ENCODE measurements at regions of chr15 and their contacts with region 1.

Region 1: DNA sequence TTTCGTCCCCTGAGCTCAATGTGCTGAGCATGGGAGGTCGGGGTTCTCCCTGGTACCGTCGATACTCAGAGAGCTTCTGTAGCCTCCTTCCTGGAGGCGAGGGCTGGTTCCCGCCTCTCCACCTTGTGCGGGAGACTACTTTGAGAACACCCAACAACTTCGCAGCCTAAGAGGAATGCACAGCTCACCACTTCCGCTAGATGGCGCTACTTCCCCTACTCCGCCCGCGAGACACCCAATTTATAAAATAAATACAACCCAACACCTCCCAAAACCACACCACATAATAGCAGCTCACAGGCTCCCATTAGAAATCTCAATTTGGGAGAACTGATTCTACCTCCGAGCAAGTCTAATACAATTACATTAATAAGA is 1.2 kb downstream of the RGMA start:
- DNase-seq: peak; percentile 57 to 73
- H3K4me3 ChIP-seq: peak overlapping the region; percentile 57
- H3K4me3 Mint-ChIP-seq: peak overlapping the region; percentile 74
- H3K27ac Mint-ChIP-seq: no peak overlapping the region
- H3K4me1 ChIP-seq: no peaks in the 10 kb centered on the region
- H3K4me1 Mint-ChIP-seq: no peaks in the 10 kb centered on the region
- H3K27me3 ChIP-seq: no peaks in the 10 kb centered on the region
- H3K27me3 Mint-ChIP-seq: peaks cover 13% of the 10 kb centered on the region
- CTCF ChIP-seq: peak; percentile 84 to 91

Region 2: GRCh38 chr15:91882858-91883586 is 1204.8 kb before region 1 on chr15:
- CTCF ChIA-PET with region 1: no interaction called
- POLR2A ChIA-PET with region 1: no interaction called
- intact Hi-C with region 1: no loop called
- DNase-seq: no peak
- H3K4me3 ChIP-seq: no peak overlapping the region
- H3K4me3 Mint-ChIP-seq: no peak overlapping the region
- H3K27ac Mint-ChIP-seq: no peak overlapping the region
- H3K4me1 ChIP-seq: no peaks in the 10 kb centered on the region
- H3K4me1 Mint-ChIP-seq: no peaks in the 10 kb centered on the region
- H3K27me3 ChIP-seq: peaks cover 1% of the 10 kb centered on the region; the same call in 1 of the 2 replicates
- H3K27me3 Mint-ChIP-seq: peaks cover 2% of the 10 kb centered on the region
- CTCF ChIP-seq: no peak

Region 3: DNA sequence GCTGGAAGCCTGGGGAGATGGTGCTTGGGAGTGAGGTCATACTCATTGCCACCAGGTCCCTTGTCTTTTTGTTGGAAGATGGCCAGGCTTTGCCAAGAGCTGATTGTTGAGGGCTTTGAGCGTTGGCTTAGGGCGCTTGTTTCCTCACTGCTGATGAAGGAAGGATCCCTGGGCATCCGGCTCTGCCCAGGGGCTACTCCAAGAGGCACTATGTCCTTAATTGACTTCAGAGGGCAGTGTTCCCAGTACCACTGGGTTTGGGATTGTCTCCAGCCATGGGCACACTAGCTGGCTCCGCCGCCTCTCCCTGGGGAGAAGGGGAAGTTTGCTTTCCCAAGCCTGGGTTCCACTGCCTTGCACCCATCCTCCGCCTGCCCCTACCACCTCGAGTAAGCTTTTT is 58.4 kb after region 1 on chr15:
- CTCF ChIA-PET with region 1: interaction called, 5 read pairs
- POLR2A ChIA-PET with region 1: no interaction called
- intact Hi-C with region 1: loop called (anchors 5 kb)
- DNase-seq: no peak
- H3K4me3 ChIP-seq: no peak overlapping the region
- H3K4me3 Mint-ChIP-seq: no peak overlapping the region
- H3K27ac Mint-ChIP-seq: no peak overlapping the region
- H3K4me1 ChIP-seq: peaks cover 2% of the 10 kb centered on the region; the same call in 1 of the 2 replicates
- H3K4me1 Mint-ChIP-seq: peaks cover 7% of the 10 kb centered on the region
- H3K27me3 ChIP-seq: no peaks in the 10 kb centered on the region
- H3K27me3 Mint-ChIP-seq: no peaks in the 10 kb centered on the region
- CTCF ChIP-seq: no peak

Region 4: GRCh38 chr15:93235926-93236780 is 148.3 kb after region 1 on chr15:
- CTCF ChIA-PET with region 1: no interaction called
- POLR2A ChIA-PET with region 1: no interaction called
- intact Hi-C with region 1: loop called (anchors 5 kb)
- DNase-seq: peak; percentile 60 to 63
- H3K4me3 ChIP-seq: peak overlapping the region; percentile 22
- H3K4me3 Mint-ChIP-seq: peak overlapping the region; percentile 69
- H3K27ac Mint-ChIP-seq: peak overlapping the region; percentile 79
- H3K4me1 ChIP-seq: peaks cover 12% of the 10 kb centered on the region; the same call in 1 of the 2 replicates
- H3K4me1 Mint-ChIP-seq: peaks cover 11% of the 10 kb centered on the region
- H3K27me3 ChIP-seq: no peaks in the 10 kb centered on the region
- H3K27me3 Mint-ChIP-seq: no peaks in the 10 kb centered on the region
- CTCF ChIP-seq: no peak

Region 5: GRCh38 chr15:93341164-93341563 is 253.4 kb after region 1 on chr15:
- CTCF ChIA-PET with region 1: no interaction called
- POLR2A ChIA-PET with region 1: no interaction called
- intact Hi-C with region 1: loop called (anchors 2 kb)
- DNase-seq: peak; percentile 56 to 60
- H3K4me3 ChIP-seq: no peak overlapping the region
- H3K4me3 Mint-ChIP-seq: no peak overlapping the region
- H3K27ac Mint-ChIP-seq: peak overlapping the region; percentile 81
- H3K4me1 ChIP-seq: peaks cover 27% of the 10 kb centered on the region
- H3K4me1 Mint-ChIP-seq: peaks cover 16% of the 10 kb centered on the region
- H3K27me3 ChIP-seq: no peaks in the 10 kb centered on the region
- H3K27me3 Mint-ChIP-seq: no peaks in the 10 kb centered on the region
- CTCF ChIP-seq: no peak

Region 6: GRCh38 chr15:93617443-93617842 is 529.6 kb after region 1 on chr15:
- CTCF ChIA-PET with region 1: interaction called, 4 read pairs
- POLR2A ChIA-PET with region 1: no interaction called
- intact Hi-C with region 1: loop called (anchors 2 kb)
- DNase-seq: peak in 1 of 2 experiments; percentile 5
- H3K4me3 ChIP-seq: no peak overlapping the region
- H3K4me3 Mint-ChIP-seq: no peak overlapping the region
- H3K27ac Mint-ChIP-seq: no peak overlapping the region
- H3K4me1 ChIP-seq: no peaks in the 10 kb centered on the region
- H3K4me1 Mint-ChIP-seq: no peaks in the 10 kb centered on the region
- H3K27me3 ChIP-seq: no peaks in the 10 kb centered on the region
- H3K27me3 Mint-ChIP-seq: peaks cover 20% of the 10 kb centered on the region
- CTCF ChIP-seq: peak in 1 of 2 experiments; percentile 35

Region 7: DNA sequence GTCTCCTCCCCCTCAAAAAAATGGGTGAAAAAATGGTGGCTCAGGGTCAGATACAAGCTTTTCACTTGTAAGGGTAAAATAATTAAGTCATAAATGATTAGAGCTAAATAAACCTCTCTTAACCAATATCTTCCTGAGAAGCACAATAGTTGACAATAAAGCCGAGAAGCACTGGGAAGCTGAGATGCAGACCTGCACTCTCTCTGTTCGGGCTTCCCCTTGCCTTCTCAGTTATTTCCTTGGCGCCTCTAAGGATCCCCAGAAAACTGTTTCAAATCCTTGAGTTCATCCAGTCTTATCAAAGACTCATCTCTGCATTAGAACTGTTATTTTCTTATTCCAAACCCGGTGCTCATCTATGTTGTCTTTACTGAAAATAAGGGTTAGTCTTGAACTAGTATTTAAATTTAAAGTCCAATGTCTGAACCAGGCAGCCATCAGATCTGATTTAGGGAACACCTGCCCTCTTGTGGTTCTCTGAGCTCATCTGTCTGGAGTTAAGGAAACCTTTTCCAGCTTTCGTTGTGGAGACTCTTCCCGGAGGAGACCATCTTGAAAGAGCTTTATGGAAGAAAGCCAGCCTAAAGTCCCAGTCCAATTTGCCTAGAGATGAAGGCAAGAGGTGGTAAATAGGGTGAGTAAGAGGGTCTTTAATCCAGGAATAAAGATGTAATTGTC is 887.1 kb after region 1 on chr15:
- CTCF ChIA-PET with region 1: interaction called, 12 read pairs
- POLR2A ChIA-PET with region 1: interaction called, 3 read pairs
- intact Hi-C with region 1: loop called (anchors 1 kb)
- DNase-seq: peak; percentile 50 to 52
- H3K4me3 ChIP-seq: no peak overlapping the region
- H3K4me3 Mint-ChIP-seq: no peak overlapping the region
- H3K27ac Mint-ChIP-seq: no peak overlapping the region
- H3K4me1 ChIP-seq: no peaks in the 10 kb centered on the region
- H3K4me1 Mint-ChIP-seq: no peaks in the 10 kb centered on the region
- H3K27me3 ChIP-seq: no peaks in the 10 kb centered on the region
- H3K27me3 Mint-ChIP-seq: peaks cover 6% of the 10 kb centered on the region
- CTCF ChIP-seq: peak; percentile 52 to 67